ENCODE measurements at regions of chr6 and their contacts with region 1.

Region 1: GRCh38 chr6:15409301-15410125 is 163.6 kb downstream of the JARID2 start:
- DNase-seq: no peak
- H3K4me3 ChIP-seq: no peak overlapping the region
- H3K27ac ChIP-seq: no peak overlapping the region
- H3K4me1 ChIP-seq: no peaks in the 10 kb centered on the region
- H3K27me3 ChIP-seq: no peaks in the 10 kb centered on the region
- CTCF ChIP-seq: no peak
- POLR2A ChIP-seq: no peak

Region 2: DNA sequence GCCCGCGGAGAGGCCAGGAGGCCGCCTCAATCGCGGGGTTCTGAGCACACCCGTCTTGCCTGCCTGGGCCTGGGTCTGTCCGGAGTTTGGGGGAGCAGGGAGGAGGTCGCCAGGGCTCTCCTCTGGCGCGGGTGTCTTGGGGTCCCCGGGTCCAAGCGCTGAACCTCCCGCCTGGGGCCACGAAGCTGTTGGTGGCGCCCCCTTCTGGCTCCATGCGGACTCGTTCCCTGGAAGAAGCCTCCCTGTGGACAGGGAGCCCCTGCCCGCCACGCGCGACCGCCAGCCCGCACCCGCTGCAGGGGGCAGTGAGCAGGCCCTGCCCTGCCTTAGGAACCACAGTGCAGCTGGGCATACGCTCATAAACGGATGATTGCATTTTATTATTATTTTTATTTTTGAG is 1639.8 kb before region 1 on chr6:
- intact Hi-C with region 1: loop called (anchors 5 kb)
- DNase-seq: no peak
- H3K4me3 ChIP-seq: no peak overlapping the region
- H3K27ac ChIP-seq: no peak overlapping the region
- H3K4me1 ChIP-seq: no peaks in the 10 kb centered on the region
- H3K27me3 ChIP-seq: no peaks in the 10 kb centered on the region
- CTCF ChIP-seq: no peak
- POLR2A ChIP-seq: no peak

Region 3: GRCh38 chr6:15358579-15359327 is 50.8 kb before region 1 on chr6:
- intact Hi-C with region 1: loop called (anchors 2 kb)
- DNase-seq: no peak
- H3K4me3 ChIP-seq: no peak overlapping the region
- H3K27ac ChIP-seq: no peak overlapping the region
- H3K4me1 ChIP-seq: no peaks in the 10 kb centered on the region
- H3K27me3 ChIP-seq: no peaks in the 10 kb centered on the region
- CTCF ChIP-seq: no peak
- POLR2A ChIP-seq: no peak

Measured in breast epithelium (tissue), 4 donors.